A549 (cell line): ENCODE measurements at regions of chr7 and their contacts with region 1.

Region 1: GRCh38 chr7:101743241-101743994 is 74.0 kb upstream of the CUX1 start:
- DNase-seq: peak; percentile 60 to 65
- ATAC-seq: peak; percentile 71 to 85
- H3K4me3 ChIP-seq: peak overlapping the region; percentile 55
- H3K27ac ChIP-seq: peak overlapping the region; percentile 72 to 86
- H3K4me1 ChIP-seq: peaks cover 25% of the 10 kb centered on the region
- CTCF ChIP-seq: peak; percentile 74
- EP300 ChIP-seq: no peak
- POLR2A ChIP-seq: no peak
- RAD21 ChIP-seq: peak in 1 of 2 experiments; percentile 63; a peak in 2 of 5 replicates

Region 2: DNA sequence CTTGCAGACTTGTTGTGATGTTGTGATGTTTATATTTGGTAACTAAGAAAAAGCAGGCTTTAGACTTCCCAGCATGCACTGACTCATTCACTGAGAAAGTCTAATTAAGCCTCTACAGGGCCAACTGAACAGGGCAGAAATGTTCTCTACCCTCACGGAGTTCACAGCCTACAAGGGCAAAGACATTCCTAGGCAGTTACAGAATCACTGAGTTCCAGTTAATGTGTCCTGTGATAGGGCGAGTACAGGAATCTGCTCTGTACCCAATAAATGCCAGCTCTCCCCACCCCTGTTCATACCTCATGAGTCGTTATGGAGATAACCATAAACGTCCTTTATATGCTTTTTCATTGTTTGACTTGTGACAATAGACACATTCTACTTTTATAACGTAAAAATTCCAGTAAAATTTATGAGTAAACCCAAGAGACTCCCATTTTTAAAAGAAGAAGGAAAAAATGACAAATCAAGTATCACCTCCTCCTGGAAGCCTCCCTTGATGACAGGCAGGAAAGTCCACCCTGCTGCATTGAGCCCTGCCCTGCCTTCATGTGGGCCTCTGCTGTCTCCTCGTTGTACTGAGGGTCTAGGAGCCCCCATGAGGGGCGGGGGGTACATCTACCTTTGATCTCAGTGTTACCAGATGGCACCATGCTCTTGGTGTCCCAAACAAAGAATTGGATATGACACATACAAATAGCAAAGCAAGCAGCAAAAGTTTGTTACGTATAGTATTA is 759.8 kb before region 1 on chr7:
- CTCF ChIA-PET with region 1: no interaction called
- POLR2A ChIA-PET with region 1: no interaction called
- DNase-seq: peak in 1 of 2 experiments; percentile 91
- ATAC-seq: peak; percentile 94 to 95
- H3K4me3 ChIP-seq: no peak overlapping the region
- H3K27ac ChIP-seq: peak overlapping the region; percentile 59 to 61; a peak in 5 of 6 replicates
- H3K4me1 ChIP-seq: peaks cover 29% of the 10 kb centered on the region
- CTCF ChIP-seq: no peak
- EP300 ChIP-seq: 0 out of 5 replicates have a peak, but pooled peaks of 1 of the 2 experiments have one; percentile 33
- POLR2A ChIP-seq: no peak
- RAD21 ChIP-seq: no peak

Region 3: DNA sequence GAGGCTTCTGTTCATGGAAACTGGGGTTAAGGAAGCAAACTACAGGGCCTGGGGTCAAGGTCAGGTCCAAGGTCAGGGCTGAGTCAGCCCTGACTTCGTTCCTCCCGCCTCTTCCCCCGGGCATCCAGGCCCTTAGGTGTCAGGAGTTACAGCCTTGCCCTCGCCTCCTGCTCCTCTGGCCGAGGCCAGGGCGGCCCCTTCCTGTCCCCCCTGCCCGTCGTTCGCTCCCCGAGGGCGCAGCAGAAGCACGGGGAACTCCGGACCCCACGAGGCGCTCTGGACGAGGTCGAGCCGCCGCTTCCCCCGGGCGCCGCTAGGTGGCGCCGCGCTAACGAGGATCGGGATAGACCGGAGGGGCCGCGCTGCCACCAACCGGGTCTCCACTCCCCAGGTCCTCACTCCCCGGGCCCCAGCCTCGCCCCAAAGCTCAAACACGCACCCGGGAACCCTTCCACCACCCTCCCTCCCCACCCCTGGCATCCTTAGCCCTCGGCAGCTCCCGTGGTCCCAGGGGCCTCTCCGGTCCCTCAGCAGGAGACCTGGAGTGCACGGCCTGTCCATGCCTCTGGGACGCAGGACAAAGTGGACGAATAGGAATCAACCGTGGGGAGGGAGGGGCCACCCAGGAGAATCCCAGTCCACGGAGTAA is 55.1 kb before region 1 on chr7:
- CTCF ChIA-PET with region 1: interaction called, 10 read pairs
- POLR2A ChIA-PET with region 1: no interaction called
- DNase-seq: peak; percentile 75 to 85
- ATAC-seq: peak; percentile 89 to 95
- H3K4me3 ChIP-seq: peak overlapping the region; percentile 34; the same call in 2 of the 3 replicates
- H3K27ac ChIP-seq: peak overlapping the region; percentile 79 to 89
- H3K4me1 ChIP-seq: peaks cover 20% of the 10 kb centered on the region
- CTCF ChIP-seq: peak; percentile 94
- EP300 ChIP-seq: no peak
- POLR2A ChIP-seq: no peak
- RAD21 ChIP-seq: peak; percentile 86 to 97

Region 4: DNA sequence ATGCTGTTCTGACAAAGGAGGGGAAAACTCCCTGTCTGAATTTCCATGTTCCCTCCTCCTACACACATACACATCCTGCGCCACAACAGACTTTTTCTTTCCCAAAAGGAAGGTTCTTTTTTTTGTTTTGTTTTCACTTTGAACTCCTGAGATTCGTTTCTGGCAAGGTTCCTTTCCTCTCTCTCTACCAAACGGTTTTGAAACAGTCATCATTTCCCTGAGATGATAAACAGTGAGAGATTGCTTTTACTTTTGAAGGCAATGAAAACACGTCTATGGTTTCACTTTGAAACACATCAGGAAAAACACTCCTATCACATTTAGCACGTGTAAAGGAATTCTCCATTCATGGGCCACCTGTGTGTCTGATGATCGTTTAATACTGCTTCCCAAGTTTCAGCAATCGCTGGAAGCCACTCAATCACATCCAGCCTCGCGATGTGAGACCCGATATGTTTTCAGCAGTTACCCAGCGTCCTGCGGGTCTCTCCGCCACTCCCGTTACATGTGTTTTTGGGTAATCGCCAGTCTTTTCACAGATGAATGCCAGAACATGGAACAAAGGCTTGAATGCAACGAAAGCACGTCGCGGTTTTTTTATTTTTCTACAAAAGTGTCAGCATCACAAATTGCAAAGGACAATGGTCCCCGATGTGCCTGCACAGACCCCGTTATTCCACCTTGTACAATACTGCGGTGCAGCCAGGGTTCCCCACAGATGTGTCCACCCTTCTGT is 11.2 kb after region 1 on chr7:
- CTCF ChIA-PET with region 1: interaction called, 17 read pairs
- POLR2A ChIA-PET with region 1: no interaction called
- DNase-seq: peak; percentile 44 to 60
- ATAC-seq: peak; percentile 83 to 86
- H3K4me3 ChIP-seq: peak overlapping the region; percentile 40
- H3K27ac ChIP-seq: peak overlapping the region; percentile 23 to 77; a peak in 5 of 6 replicates
- H3K4me1 ChIP-seq: no peaks in the 10 kb centered on the region
- CTCF ChIP-seq: no peak
- EP300 ChIP-seq: no peak
- POLR2A ChIP-seq: no peak
- RAD21 ChIP-seq: no peak

Region 5: GRCh38 chr7:101856473-101857357 is 113.3 kb after region 1 on chr7:
- CTCF ChIA-PET with region 1: no interaction called
- POLR2A ChIA-PET with region 1: no interaction called
- DNase-seq: peak; percentile 99
- ATAC-seq: peak; percentile 98
- H3K4me3 ChIP-seq: peak overlapping the region; percentile 34
- H3K27ac ChIP-seq: peak overlapping the region; percentile 87 to 94
- H3K4me1 ChIP-seq: peaks cover 77% of the 10 kb centered on the region
- CTCF ChIP-seq: peak; percentile 40; the same call in 2 of the 3 replicates
- EP300 ChIP-seq: 0 out of 5 replicates have a peak, but pooled peaks of 1 of the 2 experiments have one; percentile 22
- POLR2A ChIP-seq: no peak
- RAD21 ChIP-seq: peak; percentile 47 to 70; a peak in 4 of 5 replicates

Region 6: GRCh38 chr7:101911800-101912715 is 168.6 kb after region 1 on chr7:
- CTCF ChIA-PET with region 1: no interaction called
- POLR2A ChIA-PET with region 1: no interaction called
- DNase-seq: no peak
- ATAC-seq: peak in 1 of 2 experiments; percentile 45; a peak in 2 of 6 replicates
- H3K4me3 ChIP-seq: no peak overlapping the region
- H3K27ac ChIP-seq: peak overlapping the region in 1 of 2 experiments; percentile 64; a peak in 4 of 6 replicates
- H3K4me1 ChIP-seq: peaks cover 16% of the 10 kb centered on the region; the same call in 2 of the 3 replicates
- CTCF ChIP-seq: no peak
- EP300 ChIP-seq: no peak
- POLR2A ChIP-seq: no peak
- RAD21 ChIP-seq: no peak